ENCODE measurements at regions of chr14 and their contacts with region 1.

Region 1: GRCh38 chr14:51846631-51847488 is 13.6 kb upstream of the GNG2 start:
- DNase-seq: no peak
- ATAC-seq: no peak
- H3K4me3 ChIP-seq: no peak overlapping the region
- H3K27ac ChIP-seq: no peak overlapping the region
- H3K4me1 ChIP-seq: peaks cover 7% of the 10 kb centered on the region; the same call in 1 of the 3 replicates
- CTCF ChIP-seq: no peak
- EP300 ChIP-seq: no peak
- POLR2A ChIP-seq: no peak
- RAD21 ChIP-seq: no peak

Region 2: GRCh38 chr14:51828017-51828797 is 18.7 kb before region 1 on chr14:
- CTCF ChIA-PET with region 1: interaction called, 17 read pairs
- POLR2A ChIA-PET with region 1: no interaction called
- DNase-seq: peak; percentile 31 to 33
- ATAC-seq: peak; percentile 87 to 90
- H3K4me3 ChIP-seq: no peak overlapping the region
- H3K27ac ChIP-seq: peak overlapping the region; percentile 23 to 65; a peak in 4 of 6 replicates
- H3K4me1 ChIP-seq: peaks cover 10% of the 10 kb centered on the region
- CTCF ChIP-seq: no peak
- EP300 ChIP-seq: no peak
- POLR2A ChIP-seq: no peak
- RAD21 ChIP-seq: no peak

Region 3: DNA sequence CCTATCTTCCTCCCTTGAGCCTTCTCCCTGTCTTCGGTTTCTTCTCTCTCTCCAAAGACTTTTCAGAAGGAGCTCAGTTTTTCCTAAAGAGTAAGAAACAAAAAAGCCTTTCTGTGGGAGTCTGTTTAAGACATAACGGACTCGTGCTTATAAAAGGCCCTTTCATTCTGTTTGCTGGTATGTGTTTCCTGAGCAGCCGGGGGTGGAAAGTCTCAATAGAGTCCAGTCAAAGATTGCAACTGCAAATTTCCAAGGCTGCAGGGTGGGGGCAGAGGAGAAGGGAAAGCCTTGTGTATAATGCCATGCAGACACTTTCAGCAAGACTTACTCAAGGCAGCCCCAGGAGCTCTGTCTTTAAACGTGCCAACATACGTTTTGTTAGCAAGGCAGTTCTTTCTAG is 75.8 kb after region 1 on chr14:
- CTCF ChIA-PET with region 1: no interaction called
- POLR2A ChIA-PET with region 1: no interaction called
- DNase-seq: no peak
- ATAC-seq: no peak
- H3K4me3 ChIP-seq: no peak overlapping the region
- H3K27ac ChIP-seq: no peak overlapping the region
- H3K4me1 ChIP-seq: no peaks in the 10 kb centered on the region
- CTCF ChIP-seq: no peak
- EP300 ChIP-seq: no peak
- POLR2A ChIP-seq: no peak
- RAD21 ChIP-seq: no peak

Measured in A549 (cell line).